CD8-positive, alpha-beta T cell (primary cell): ENCODE measurements at regions of chr2 and their contacts with region 1.

Region 1: GRCh38 chr2:35023545-35023944 is 1332.0 kb upstream of the CRIM1 start:
- DNase-seq: no peak
- ATAC-seq: no peak
- H3K4me3 ChIP-seq: no peak overlapping the region
- H3K4me3 Mint-ChIP-seq: no peak overlapping the region
- H3K27ac ChIP-seq: no peak overlapping the region
- H3K27ac Mint-ChIP-seq: no peak overlapping the region
- H3K4me1 ChIP-seq: no peaks in the 10 kb centered on the region
- H3K4me1 Mint-ChIP-seq: no peaks in the 10 kb centered on the region
- H3K27me3 ChIP-seq: no peaks in the 10 kb centered on the region
- H3K27me3 Mint-ChIP-seq: no peaks in the 10 kb centered on the region
- CTCF ChIP-seq: no peak

Region 2: DNA sequence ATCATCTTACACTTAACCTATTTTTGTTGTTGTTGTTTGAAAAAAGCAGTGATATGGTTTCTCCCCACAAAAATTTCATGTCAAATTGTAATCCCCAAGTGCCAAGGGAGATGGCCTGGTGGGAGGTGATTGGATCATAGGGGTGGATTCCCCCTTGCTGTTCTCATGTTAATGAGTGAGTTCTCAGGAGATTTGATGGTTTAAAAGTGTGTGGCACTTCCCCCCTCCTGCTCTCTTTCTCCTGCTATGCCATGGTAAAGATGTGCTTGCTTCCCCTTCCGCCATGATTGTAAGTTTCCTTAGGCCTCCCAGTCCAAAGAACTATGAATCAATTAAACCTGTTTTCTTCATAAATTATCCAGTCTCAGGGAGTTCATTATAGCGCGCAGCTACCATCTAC is 61.7 kb before region 1 on chr2:
- CTCF ChIA-PET with region 1: no interaction called
- POLR2A ChIA-PET with region 1: no interaction called
- intact Hi-C with region 1: loop called in 1 of 2 experiments (anchors 5 kb)
- DNase-seq: no peak
- ATAC-seq: no peak
- H3K4me3 ChIP-seq: no peak overlapping the region
- H3K4me3 Mint-ChIP-seq: no peak overlapping the region
- H3K27ac ChIP-seq: no peak overlapping the region
- H3K27ac Mint-ChIP-seq: no peak overlapping the region
- H3K4me1 ChIP-seq: no peaks in the 10 kb centered on the region
- H3K4me1 Mint-ChIP-seq: no peaks in the 10 kb centered on the region
- H3K27me3 ChIP-seq: no peaks in the 10 kb centered on the region
- H3K27me3 Mint-ChIP-seq: no peaks in the 10 kb centered on the region
- CTCF ChIP-seq: no peak